WTC11 (cell line): ENCODE measurements at regions of chr12 and their contacts with region 1.

Region 1: DNA sequence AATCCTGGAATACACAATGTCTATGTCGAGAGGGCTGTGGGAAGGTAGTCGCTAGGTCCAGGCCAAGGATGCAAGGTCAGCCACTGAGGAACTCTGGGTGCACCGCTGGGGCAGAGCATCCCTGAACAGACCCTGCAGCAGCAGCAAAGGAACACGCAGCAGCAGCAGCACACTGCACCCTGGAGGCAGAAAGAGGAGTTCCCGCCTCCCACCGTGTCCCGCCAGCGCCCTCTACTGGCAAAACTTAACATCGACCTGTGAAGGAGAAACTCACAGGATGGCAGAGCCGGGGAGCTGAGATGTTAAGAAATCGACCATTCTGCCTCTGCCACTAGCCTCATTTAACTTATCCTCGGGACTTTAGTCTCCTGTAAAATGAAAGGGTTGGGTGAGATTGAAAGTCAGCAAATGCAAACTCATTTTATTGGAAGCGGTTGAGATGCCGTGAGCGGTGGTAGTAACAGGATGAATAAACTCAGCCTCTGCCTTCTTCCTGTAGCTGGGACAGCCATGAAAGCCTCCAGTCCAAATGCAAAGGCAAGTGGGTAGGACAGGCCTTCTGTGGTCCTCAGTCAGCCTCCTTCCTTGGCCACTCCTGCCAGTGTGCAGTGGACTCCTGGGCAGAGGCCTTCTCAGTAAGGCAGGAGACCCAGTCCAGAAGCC is 45.6 kb downstream of the STAB2 start:
- DNase-seq: peak; percentile 93
- ATAC-seq: peak; percentile 99
- H3K4me3 Mint-ChIP-seq: no peak overlapping the region
- H3K27ac Mint-ChIP-seq: no peak overlapping the region
- H3K4me1 Mint-ChIP-seq: no peaks in the 10 kb centered on the region
- H3K27me3 Mint-ChIP-seq: no peaks in the 10 kb centered on the region
- CTCF ChIP-seq: peak; percentile 99

Region 2: DNA sequence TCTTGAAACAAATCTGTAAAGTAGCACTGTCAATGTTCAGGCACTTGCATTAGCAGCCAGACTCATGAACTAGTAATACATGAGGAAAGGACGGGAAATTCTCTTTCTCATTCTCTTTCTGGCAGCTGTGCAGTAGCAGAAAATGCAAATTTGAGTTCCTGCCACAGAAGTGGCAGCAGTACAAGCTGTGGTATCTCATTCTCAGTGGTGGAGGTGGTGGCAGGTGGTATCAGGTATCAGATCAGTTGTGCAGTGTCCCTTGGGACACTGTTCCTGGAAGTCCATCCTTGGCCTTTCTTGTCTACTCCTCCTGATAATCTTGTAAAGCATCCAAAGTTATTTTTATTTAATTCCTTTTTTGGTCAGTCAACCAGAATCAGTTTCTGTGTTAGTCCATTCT is 240.0 kb before region 1 on chr12:
- CTCF ChIA-PET with region 1: no interaction called
- POLR2A ChIA-PET with region 1: no interaction called
- DNase-seq: no peak
- ATAC-seq: no peak
- H3K4me3 Mint-ChIP-seq: no peak overlapping the region
- H3K27ac Mint-ChIP-seq: no peak overlapping the region
- H3K4me1 Mint-ChIP-seq: no peaks in the 10 kb centered on the region
- H3K27me3 Mint-ChIP-seq: no peaks in the 10 kb centered on the region
- CTCF ChIP-seq: no peak

Region 3: GRCh38 chr12:103470664-103471063 is 162.0 kb before region 1 on chr12:
- CTCF ChIA-PET with region 1: no interaction called
- POLR2A ChIA-PET with region 1: no interaction called
- DNase-seq: no peak
- ATAC-seq: no peak
- H3K4me3 Mint-ChIP-seq: no peak overlapping the region
- H3K27ac Mint-ChIP-seq: no peak overlapping the region
- H3K4me1 Mint-ChIP-seq: peaks cover 26% of the 10 kb centered on the region
- H3K27me3 Mint-ChIP-seq: peaks cover 5% of the 10 kb centered on the region
- CTCF ChIP-seq: no peak

Region 4: GRCh38 chr12:103548622-103549601 is 83.8 kb before region 1 on chr12:
- CTCF ChIA-PET with region 1: interaction called, 16 read pairs
- POLR2A ChIA-PET with region 1: no interaction called
- DNase-seq: peak; percentile 75
- ATAC-seq: peak; percentile 81
- H3K4me3 Mint-ChIP-seq: no peak overlapping the region
- H3K27ac Mint-ChIP-seq: no peak overlapping the region
- H3K4me1 Mint-ChIP-seq: 0 out of 2 replicates have a peak, but pooled peaks cover 4% of the 10 kb centered on the region
- H3K27me3 Mint-ChIP-seq: no peaks in the 10 kb centered on the region; the same call in 1 of the 2 replicates
- CTCF ChIP-seq: peak; percentile 85

Region 5: GRCh38 chr12:103586132-103586531 is 46.6 kb before region 1 on chr12:
- CTCF ChIA-PET with region 1: interaction called, 21 read pairs
- POLR2A ChIA-PET with region 1: no interaction called
- DNase-seq: no peak
- ATAC-seq: no peak
- H3K4me3 Mint-ChIP-seq: no peak overlapping the region
- H3K27ac Mint-ChIP-seq: no peak overlapping the region
- H3K4me1 Mint-ChIP-seq: no peaks in the 10 kb centered on the region
- H3K27me3 Mint-ChIP-seq: no peaks in the 10 kb centered on the region; the same call in 1 of the 2 replicates
- CTCF ChIP-seq: no peak

Region 6: GRCh38 chr12:103647267-103647666 is 14.6 kb after region 1 on chr12:
- CTCF ChIA-PET with region 1: interaction called, 38 read pairs
- POLR2A ChIA-PET with region 1: no interaction called
- DNase-seq: no peak
- ATAC-seq: no peak
- H3K4me3 Mint-ChIP-seq: no peak overlapping the region
- H3K27ac Mint-ChIP-seq: no peak overlapping the region
- H3K4me1 Mint-ChIP-seq: no peaks in the 10 kb centered on the region
- H3K27me3 Mint-ChIP-seq: no peaks in the 10 kb centered on the region
- CTCF ChIP-seq: no peak

Region 7: DNA sequence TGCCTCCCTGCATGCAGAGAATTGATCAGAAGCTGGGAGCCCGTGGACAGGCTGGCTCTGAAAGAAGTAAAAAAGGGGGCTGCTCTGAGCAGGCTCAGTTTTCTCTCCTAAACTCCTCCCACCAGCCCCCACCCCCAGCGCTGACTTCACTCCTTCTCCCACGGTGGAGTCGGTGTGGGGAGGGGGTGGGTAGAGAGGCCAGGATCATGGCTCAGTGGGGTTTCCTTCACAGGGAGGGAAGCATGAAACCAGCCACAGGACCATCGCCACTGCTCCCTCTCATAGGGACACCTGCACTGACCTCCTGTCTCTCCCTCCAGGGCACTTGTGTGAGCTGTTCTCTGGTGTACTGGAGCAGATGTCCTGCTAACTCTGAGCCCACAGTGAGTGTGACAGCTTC is 33.3 kb after region 1 on chr12:
- CTCF ChIA-PET with region 1: interaction called, 21 read pairs
- POLR2A ChIA-PET with region 1: no interaction called
- DNase-seq: peak; percentile 23
- ATAC-seq: peak; percentile 51
- H3K4me3 Mint-ChIP-seq: no peak overlapping the region
- H3K27ac Mint-ChIP-seq: no peak overlapping the region
- H3K4me1 Mint-ChIP-seq: peaks cover 38% of the 10 kb centered on the region
- H3K27me3 Mint-ChIP-seq: no peaks in the 10 kb centered on the region; the same call in 1 of the 2 replicates
- CTCF ChIP-seq: no peak

Region 8: DNA sequence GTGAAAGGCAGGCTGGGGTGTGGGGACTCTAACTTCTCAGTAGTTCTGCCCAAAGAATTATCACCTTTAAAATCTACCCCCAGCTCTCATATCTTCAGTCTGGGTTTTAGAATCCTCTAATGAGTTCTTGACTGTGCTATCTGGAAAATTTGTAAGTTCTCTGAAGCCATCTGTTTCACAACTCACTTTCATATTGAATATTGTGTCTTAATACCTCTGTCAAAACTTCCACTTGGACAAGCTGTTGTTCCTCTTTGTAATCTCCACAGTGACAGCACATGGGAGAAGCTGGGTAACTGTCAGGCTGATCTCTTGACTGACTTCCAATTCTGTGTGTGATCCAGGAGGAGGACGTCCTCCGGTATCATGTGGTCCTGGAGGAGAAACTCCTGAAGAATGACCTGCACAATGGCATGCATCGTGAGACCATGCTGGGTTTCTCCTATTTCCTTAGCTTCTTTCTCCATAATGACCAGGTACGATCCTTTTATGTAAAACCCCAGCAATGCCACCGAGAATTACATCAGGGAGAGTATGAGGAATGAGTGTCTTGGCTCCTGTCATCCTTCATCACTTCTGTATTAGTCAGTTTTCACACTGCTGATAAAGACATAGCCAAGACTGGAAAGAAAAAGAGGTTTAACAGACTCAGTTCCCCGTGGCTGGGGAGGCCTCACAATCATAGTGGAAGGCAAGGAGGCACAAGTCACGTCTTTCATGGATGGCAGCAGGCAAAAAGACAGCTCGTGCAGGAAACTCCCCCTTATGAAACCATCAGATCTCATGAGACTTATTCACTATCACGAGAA is 66.3 kb after region 1 on chr12:
- CTCF ChIA-PET with region 1: interaction called, 10 read pairs
- POLR2A ChIA-PET with region 1: no interaction called
- DNase-seq: no peak
- ATAC-seq: no peak
- H3K4me3 Mint-ChIP-seq: no peak overlapping the region
- H3K27ac Mint-ChIP-seq: no peak overlapping the region
- H3K4me1 Mint-ChIP-seq: no peaks in the 10 kb centered on the region
- H3K27me3 Mint-ChIP-seq: no peaks in the 10 kb centered on the region; the same call in 1 of the 2 replicates
- CTCF ChIP-seq: no peak

Region 9: DNA sequence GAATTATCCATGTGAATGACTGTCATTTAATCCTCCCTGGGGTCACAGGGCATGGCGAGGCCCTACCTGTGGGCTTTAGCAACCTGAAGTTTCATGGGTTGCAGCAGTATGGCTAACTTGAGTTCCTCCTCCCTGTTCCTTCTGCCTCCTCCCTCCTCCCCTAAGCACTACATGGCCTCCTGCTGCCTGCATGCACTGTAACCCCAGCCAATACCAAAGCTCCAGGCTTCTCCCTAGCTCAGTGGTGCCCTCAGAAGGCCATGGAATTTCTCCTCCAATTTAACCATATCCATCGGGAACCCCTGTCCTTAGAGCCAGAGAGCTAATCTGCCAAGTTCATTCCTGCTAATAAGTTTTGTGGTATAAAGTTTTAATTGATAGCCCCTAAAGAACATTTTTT is 113.3 kb after region 1 on chr12:
- CTCF ChIA-PET with region 1: interaction called, 28 read pairs
- POLR2A ChIA-PET with region 1: no interaction called
- DNase-seq: peak; percentile 45
- ATAC-seq: peak; percentile 99
- H3K4me3 Mint-ChIP-seq: no peak overlapping the region
- H3K27ac Mint-ChIP-seq: no peak overlapping the region
- H3K4me1 Mint-ChIP-seq: peaks cover 10% of the 10 kb centered on the region
- H3K27me3 Mint-ChIP-seq: no peaks in the 10 kb centered on the region
- CTCF ChIP-seq: no peak

Region 10: DNA sequence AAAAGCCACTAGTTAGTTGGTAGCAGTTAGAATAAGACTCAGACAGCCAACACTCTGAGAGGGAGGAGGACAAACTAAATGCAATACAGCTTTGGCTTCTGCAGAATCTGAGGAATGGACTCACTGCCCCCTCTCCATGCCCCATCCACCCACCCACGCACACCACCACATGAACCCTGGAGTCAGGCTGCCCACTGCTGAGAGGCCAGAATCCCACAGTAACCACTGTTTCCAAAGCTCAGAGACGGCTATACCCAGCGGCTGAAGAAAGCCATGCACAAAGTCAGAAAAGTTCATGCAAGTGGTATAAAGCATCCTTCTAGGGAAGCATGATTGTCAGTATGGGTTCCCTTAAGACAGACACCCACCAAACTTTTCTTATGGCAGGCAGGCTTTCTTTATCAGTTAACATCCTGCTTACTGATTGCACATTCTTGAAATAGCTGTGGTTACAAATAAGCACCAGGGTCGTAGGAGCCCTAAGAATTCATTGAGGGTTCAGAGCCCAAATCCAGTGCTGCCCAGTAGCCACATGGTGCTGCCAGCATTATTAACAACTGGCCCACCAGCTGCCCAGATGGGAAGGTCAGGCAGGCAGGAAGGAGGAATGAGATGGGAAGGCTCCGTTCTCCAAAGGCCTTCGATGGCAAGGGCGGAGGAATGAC is 146.9 kb after region 1 on chr12:
- CTCF ChIA-PET with region 1: no interaction called
- POLR2A ChIA-PET with region 1: no interaction called
- DNase-seq: no peak
- ATAC-seq: peak; percentile 34; the same call in 1 of the 2 replicates
- H3K4me3 Mint-ChIP-seq: no peak overlapping the region
- H3K27ac Mint-ChIP-seq: peak overlapping the region; percentile 84; the same call in 1 of the 2 replicates
- H3K4me1 Mint-ChIP-seq: no peaks in the 10 kb centered on the region
- H3K27me3 Mint-ChIP-seq: no peaks in the 10 kb centered on the region
- CTCF ChIP-seq: no peak

Region 11: DNA sequence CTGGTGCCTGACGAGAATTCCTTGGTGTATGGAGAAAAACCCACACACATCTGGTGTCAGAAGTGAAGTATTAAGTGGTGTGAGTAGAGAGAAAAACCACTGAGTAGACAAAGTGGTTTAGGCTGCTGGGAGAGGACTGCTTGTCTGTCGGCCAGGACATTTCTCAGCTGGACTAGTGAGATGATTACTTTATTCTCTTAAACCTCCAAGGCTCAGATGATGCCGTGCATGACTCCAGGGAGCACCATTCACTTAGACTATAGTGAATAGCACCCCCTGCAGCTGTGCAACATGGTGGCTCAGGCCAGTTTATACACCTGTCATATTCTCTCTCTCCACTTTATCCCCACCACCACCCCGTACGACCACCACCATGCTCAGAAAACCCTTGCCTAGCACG is 533.8 kb after region 1 on chr12:
- CTCF ChIA-PET with region 1: no interaction called
- POLR2A ChIA-PET with region 1: no interaction called
- DNase-seq: no peak
- ATAC-seq: no peak
- H3K4me3 Mint-ChIP-seq: no peak overlapping the region
- H3K27ac Mint-ChIP-seq: no peak overlapping the region
- H3K4me1 Mint-ChIP-seq: peaks cover 3% of the 10 kb centered on the region
- H3K27me3 Mint-ChIP-seq: peaks cover 4% of the 10 kb centered on the region; the same call in 1 of the 2 replicates
- CTCF ChIP-seq: no peak